Panc1 (cell line): ENCODE measurements at regions of chr16 and their contacts with region 1.

Region 1: GRCh38 chr16:31179747-31180459 is at the start of gene FUS:
- DNase-seq: peak; percentile 67
- ATAC-seq: peak; percentile 77
- H3K4me3 ChIP-seq: peak within 1 kb of the TSS; percentile 60 to 99
- H3K27ac ChIP-seq: peak within 1 kb of the TSS; percentile 97
- H3K4me1 ChIP-seq: peaks cover 16% of the 10 kb centered on the region
- H3K27me3 ChIP-seq: no peaks in the 10 kb centered on the region
- CTCF ChIP-seq: no peak
- total RNA-seq, gene FUS: 441 TPM

Region 2: DNA sequence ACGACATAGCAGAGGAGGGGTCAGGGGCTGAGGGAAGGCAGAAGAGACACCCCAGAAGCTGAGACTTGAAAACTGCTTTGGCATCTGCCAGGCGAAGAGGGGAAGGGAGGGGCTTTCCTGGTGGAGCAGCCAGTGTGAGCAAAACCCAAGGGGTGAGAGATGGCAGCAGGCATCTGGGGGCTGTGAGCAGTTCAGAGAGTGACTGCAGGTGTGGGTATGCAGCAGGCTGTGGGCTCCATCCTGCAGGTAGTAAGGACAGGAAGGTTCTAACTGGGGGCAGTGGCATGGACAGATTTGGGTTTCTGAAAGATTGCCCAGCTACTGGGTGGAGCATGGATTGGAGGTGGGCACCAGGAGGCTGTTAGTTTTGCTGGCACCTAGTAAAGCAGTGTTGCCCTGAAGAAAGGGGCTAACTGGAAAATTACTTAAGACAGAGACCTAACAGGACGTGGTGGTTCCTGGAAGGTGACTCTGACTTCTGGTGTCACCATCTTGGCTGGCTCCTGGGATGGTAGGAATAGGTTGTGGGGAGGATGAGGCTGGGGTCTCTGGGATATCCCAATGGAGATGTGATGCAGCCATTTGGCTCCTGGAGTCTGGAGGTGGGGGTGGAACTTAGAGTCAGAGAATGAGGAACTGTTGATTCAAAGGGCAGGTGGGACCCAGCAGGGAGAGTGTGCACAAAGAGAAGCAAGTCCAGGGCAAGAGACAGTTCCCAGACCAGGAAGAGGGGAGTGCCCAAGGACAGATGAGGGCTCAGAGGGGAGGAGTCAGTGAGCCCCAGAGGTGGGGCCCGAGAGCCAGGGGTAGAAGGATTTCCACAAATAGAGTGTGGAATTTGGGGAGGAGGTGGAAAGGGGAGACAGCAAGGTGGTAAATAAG is 297.2 kb before region 1 on chr16:
- CTCF ChIA-PET with region 1: no interaction called
- POLR2A ChIA-PET with region 1: interaction called, 10 read pairs
- in situ Hi-C with region 1: no loop called
- intact Hi-C with region 1: no loop called
- DNase-seq: no peak
- ATAC-seq: no peak
- H3K4me3 ChIP-seq: no peak overlapping the region
- H3K27ac ChIP-seq: no peak overlapping the region
- H3K4me1 ChIP-seq: no peaks in the 10 kb centered on the region
- H3K27me3 ChIP-seq: no peaks in the 10 kb centered on the region
- CTCF ChIP-seq: no peak

Region 3: DNA sequence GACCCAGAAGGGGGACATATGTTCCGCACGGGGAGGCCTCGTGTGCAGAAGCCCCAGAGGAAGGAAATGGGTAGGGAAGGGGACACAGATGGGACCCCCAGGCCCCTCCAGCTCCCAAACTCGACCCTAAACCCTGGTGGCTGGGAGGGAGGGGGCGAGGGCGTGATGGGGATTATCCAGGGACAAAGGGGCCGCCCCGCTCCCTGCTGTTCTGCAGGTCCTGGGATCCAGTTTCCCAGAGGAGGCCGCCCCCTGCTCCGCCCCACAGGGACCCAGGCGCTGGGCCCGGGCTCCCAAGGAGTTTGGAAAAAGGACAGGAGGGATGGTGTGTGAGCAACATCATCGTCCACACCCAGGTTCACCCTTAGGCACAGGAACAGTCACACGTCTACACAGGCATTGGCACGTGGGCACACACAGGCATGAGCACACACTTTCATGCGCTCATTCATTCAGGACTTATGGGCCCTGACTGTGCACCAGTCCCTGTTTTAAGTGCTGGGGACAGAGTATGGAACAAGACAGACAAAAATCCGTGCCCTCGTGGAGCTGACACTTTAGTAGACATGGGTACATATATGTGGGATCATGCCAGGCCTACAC is 269.4 kb before region 1 on chr16:
- CTCF ChIA-PET with region 1: no interaction called
- POLR2A ChIA-PET with region 1: no interaction called
- in situ Hi-C with region 1: no loop called
- intact Hi-C with region 1: no loop called
- DNase-seq: no peak
- ATAC-seq: no peak
- H3K4me3 ChIP-seq: no peak overlapping the region
- H3K27ac ChIP-seq: no peak overlapping the region
- H3K4me1 ChIP-seq: 0 out of 2 replicates have a peak, but pooled peaks cover 3% of the 10 kb centered on the region
- H3K27me3 ChIP-seq: no peaks in the 10 kb centered on the region
- CTCF ChIP-seq: no peak

Region 4: GRCh38 chr16:31130336-31131276 is 49.3 kb before region 1 on chr16:
- CTCF ChIA-PET with region 1: no interaction called
- POLR2A ChIA-PET with region 1: interaction called, 11 read pairs
- in situ Hi-C with region 1: no loop called
- intact Hi-C with region 1: no loop called
- DNase-seq: no peak
- ATAC-seq: no peak
- H3K4me3 ChIP-seq: no peak overlapping the region
- H3K27ac ChIP-seq: no peak overlapping the region
- H3K4me1 ChIP-seq: no peaks in the 10 kb centered on the region
- H3K27me3 ChIP-seq: no peaks in the 10 kb centered on the region
- CTCF ChIP-seq: no peak

Region 5: GRCh38 chr16:31142109-31143010 is 37.5 kb before region 1 on chr16:
- CTCF ChIA-PET with region 1: interaction called, 3 read pairs
- POLR2A ChIA-PET with region 1: interaction called, 10 read pairs
- in situ Hi-C with region 1: no loop called
- intact Hi-C with region 1: no loop called
- DNase-seq: peak; percentile 82
- ATAC-seq: peak; percentile 92
- H3K4me3 ChIP-seq: peak overlapping the region; percentile 43 to 55
- H3K27ac ChIP-seq: peak overlapping the region; percentile 66
- H3K4me1 ChIP-seq: peaks cover 16% of the 10 kb centered on the region
- H3K27me3 ChIP-seq: no peaks in the 10 kb centered on the region
- CTCF ChIP-seq: peak; percentile 99